OCI-LY7 (cell line): ENCODE measurements at regions of chr5 and their contacts with region 1.

Region 1: DNA sequence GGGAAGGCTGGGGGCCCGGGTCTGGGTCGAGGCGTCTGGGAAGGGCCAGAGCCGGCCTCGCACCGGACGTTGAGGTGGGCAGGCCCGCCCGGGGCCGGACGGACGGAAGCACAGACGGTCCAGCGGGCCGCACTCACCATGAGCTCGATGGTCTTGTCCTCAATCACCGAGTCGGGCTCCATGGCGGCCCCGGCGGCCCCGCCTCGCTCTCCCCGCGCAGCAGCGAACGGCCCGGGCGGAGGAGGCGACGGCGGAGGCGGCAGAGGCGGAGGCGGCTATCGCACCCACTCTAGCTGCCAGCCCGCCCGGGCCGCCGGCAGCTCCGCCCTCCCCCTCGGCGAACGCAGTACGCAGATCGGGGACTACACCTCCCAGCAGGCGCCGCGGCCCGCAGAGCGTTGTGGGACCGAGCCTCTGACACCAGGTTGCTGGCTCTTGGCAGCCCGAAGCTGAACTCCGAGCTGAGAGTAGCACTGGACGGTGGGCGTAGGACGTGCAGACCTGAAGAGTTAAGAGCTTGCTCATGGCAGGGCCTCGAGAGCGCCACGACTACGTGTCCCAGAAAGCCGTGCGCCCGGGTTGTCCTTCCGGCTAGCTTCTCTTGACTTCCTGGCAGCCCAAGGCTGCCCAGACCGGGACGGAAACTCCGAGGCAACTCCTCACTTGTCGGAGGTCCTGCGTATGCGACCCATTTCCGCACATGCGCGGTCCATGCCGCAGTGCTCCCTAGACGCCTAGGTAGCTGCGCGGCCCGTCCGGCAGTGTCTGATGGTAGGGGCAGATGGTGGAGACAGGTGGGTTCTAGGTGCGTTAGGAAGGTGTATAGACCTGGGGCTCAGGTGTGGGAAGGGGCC is at the start of gene FBXW11:
- DNase-seq: peak; percentile 98
- H3K4me3 ChIP-seq: peak within 1 kb of the TSS; percentile 95
- H3K27ac ChIP-seq: peak within 1 kb of the TSS; percentile 69
- H3K4me1 ChIP-seq: peaks cover 35% of the 10 kb centered on the region
- CTCF ChIP-seq: no peak
- total RNA-seq, gene FBXW11: 33.0 and 40.9 TPM in 2 replicates

Region 2: GRCh38 chr5:171907725-171908343 is 98.7 kb before region 1 on chr5:
- CTCF ChIA-PET with region 1: interaction called, 7 read pairs
- POLR2A ChIA-PET with region 1: interaction called, 17 read pairs
- intact Hi-C with region 1: loop called (anchors 1 kb)
- DNase-seq: peak; percentile 68
- H3K4me3 ChIP-seq: no peak overlapping the region
- H3K27ac ChIP-seq: no peak overlapping the region
- H3K4me1 ChIP-seq: peaks cover 5% of the 10 kb centered on the region
- CTCF ChIP-seq: peak; percentile 97

Region 3: DNA sequence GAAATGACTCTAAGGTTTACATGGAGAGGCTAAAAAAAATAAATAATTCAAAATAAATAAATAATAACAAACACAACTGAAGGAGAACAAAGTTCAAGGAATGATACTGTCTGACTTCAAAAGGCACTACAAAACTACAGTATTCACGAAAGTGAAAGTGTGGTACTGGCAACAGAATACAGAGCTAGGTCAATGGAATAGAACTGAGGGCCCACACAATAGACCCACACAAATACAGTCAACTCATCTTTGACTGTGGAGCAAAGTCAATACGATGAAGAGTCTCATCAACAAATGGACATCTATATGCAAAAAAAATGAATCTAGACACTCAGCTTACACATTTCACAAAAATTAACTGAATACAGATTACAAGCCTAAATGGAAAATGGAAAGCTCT is 75.4 kb before region 1 on chr5:
- CTCF ChIA-PET with region 1: no interaction called
- POLR2A ChIA-PET with region 1: interaction called, 3 read pairs
- intact Hi-C with region 1: loop called (anchors 5 kb)
- DNase-seq: no peak
- H3K4me3 ChIP-seq: no peak overlapping the region
- H3K27ac ChIP-seq: no peak overlapping the region
- H3K4me1 ChIP-seq: no peaks in the 10 kb centered on the region
- CTCF ChIP-seq: no peak

Region 4: GRCh38 chr5:171984748-171985419 is 21.7 kb before region 1 on chr5:
- CTCF ChIA-PET with region 1: no interaction called
- POLR2A ChIA-PET with region 1: interaction called, 14 read pairs
- intact Hi-C with region 1: no loop called
- DNase-seq: no peak
- H3K4me3 ChIP-seq: no peak overlapping the region
- H3K27ac ChIP-seq: no peak overlapping the region
- H3K4me1 ChIP-seq: peaks cover 22% of the 10 kb centered on the region
- CTCF ChIP-seq: no peak

Region 5: GRCh38 chr5:172188033-172188892 is 181.7 kb after region 1 on chr5 and contains the start of gene STK10:
- CTCF ChIA-PET with region 1: no interaction called
- POLR2A ChIA-PET with region 1: interaction called, 7 read pairs
- intact Hi-C with region 1: loop called (anchors 5 kb)
- DNase-seq: peak; percentile 90
- H3K4me3 ChIP-seq: peak within 1 kb of the TSS; percentile 97
- H3K27ac ChIP-seq: peak within 1 kb of the TSS; percentile 62
- H3K4me1 ChIP-seq: peaks cover 26% of the 10 kb centered on the region
- CTCF ChIP-seq: peak; percentile 95
- total RNA-seq, gene STK10: 53.1 and 53.7 TPM in 2 replicates

Region 6: DNA sequence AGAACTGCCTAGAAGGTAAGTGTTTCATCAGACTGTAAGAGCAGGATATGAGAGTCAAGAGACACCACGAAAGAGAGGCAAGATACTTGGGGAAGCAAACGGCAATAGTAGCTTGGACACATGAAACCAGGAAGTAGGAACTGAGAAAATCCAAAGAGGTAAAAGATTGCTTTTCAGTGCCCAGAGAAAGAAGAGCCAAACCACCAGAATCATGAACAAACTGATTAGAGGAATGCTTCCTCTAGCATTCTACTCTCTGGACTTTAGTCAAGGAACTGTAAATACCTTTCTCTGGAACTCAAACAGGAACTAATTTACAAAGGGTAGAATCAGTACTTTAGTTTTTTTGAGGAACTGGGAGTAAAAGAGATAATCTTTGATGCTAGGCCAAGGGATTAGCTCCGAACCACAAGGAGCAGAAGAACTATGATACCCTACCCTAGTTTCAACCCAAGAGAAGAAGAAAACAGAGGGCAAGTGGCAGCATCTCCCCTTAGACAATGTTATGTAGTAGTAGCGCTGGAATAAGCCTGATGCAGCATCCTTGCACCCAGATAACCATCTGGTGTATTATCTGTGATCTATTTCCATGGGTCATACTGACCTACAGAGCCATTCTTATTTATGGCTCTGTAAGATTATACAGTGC is 228.7 kb after region 1 on chr5:
- CTCF ChIA-PET with region 1: no interaction called
- POLR2A ChIA-PET with region 1: no interaction called
- intact Hi-C with region 1: no loop called
- DNase-seq: peak; percentile 29
- H3K4me3 ChIP-seq: peak overlapping the region; percentile 22
- H3K27ac ChIP-seq: peak overlapping the region; percentile 22
- H3K4me1 ChIP-seq: peaks cover 24% of the 10 kb centered on the region
- CTCF ChIP-seq: no peak